ENCODE measurements at regions of chrX and their contacts with region 1.

Region 1: GRCh38 chrX:83630662-83631061 is 122.6 kb downstream of the POU3F4 start:
- DNase-seq: no peak

Region 2: DNA sequence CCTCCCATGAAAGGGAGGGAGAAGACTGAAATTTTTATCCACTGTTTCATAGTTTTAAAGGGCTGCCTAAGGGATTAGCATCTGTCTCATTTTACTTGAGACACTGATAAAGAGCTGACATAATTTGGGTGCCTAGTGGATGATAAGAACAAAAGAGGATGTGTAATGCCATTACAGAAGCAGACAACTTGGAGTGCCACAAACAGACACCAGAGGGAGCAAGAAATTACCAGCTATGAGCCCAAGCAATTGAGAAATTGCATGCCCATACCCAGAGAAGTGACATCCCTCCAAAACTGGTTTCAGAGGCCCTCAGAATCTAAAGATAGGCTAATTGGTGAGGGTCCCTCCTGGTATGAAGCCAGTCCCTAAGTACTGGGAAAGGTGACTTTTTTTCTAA is 161.1 kb before region 1 on chrX:
- CTCF ChIA-PET with region 1: interaction called, 19 read pairs
- POLR2A ChIA-PET with region 1: interaction called, 3 read pairs
- DNase-seq: peak; percentile 26